ENCODE measurements at regions of chr19 and their contacts with region 1.

Region 1: GRCh38 chr19:20167020-20167644 is at the start of gene ZNF486:
- DNase-seq: peak; percentile 95 to 99 (median 96)
- ATAC-seq: peak; percentile 98 to 99 (median 99)
- H3K4me3 ChIP-seq: peak within 1 kb of the TSS; percentile 40 to 89 (median 70)
- H3K27ac ChIP-seq: peak within 1 kb of the TSS in 11 of 12 donors; percentile 37 to 81 (median 69)
- H3K4me1 ChIP-seq: peaks cover 0 to 10% (median 6%) of the 10 kb centered on the region in 12 donors
- H3K27me3 ChIP-seq: no peaks in the 10 kb centered on the region
- CTCF ChIP-seq: no peak
- POLR2A ChIP-seq: peak in 1 of 2 donors; percentile 52
- total RNA-seq, gene ZNF486: 1.2 to 3.5 (median 1.8) TPM

Region 2: GRCh38 chr19:20051841-20052768 is 115.0 kb before region 1 on chr19:
- intact Hi-C with region 1: loop called in 1 of 10 experiments (anchors 5 kb)
- DNase-seq: peak; percentile 94 to 98 (median 95)
- ATAC-seq: peak; percentile 99 to 100 (median 100)
- H3K4me3 ChIP-seq: peak overlapping the region; percentile 48 to 99 (median 74)
- H3K27ac ChIP-seq: peak overlapping the region; percentile 57 to 85 (median 73)
- H3K4me1 ChIP-seq: peaks cover 0 to 10% (median 2%) of the 10 kb centered on the region in 12 donors
- H3K27me3 ChIP-seq: no peaks in the 10 kb centered on the region
- CTCF ChIP-seq: peak in 3 of 12 donors; percentile 5 to 35 (median 14)
- POLR2A ChIP-seq: peak in 1 of 2 donors; percentile 59

Region 3: DNA sequence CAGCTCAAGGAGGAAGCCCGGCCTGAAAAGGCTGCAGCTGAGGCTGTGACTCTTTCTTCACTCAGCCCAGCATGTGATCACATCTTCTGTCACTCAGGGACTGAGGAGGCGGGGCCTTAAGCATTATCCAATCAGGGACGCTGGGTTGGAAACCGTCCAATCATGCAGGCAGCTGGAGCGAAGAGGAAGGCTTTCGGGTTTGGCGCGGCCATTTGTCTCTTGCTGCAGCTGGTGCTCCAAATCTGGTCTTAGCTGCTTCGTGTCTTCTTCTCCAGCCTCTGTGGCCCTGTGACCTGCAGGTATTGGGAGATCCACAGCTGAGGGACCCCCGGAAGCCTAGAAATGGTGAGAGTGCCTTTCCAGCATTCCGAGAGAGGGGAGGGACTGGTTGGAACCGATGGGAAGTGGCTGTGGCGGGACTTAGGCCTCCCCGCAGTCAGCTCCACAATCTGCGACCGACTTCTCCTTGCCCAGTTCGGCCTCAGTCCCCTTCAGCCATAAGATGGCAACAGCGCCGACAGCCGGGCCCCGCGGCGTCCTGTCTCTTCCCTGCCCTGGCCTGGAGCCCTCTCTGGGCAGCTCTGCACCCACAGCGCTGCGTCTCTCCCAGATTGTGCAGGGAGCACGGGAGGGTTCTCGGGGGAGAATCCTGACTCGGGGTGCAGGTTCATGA is 89.2 kb before region 1 on chr19 and contains the start of gene ZNF90:
- intact Hi-C with region 1: loop called in 2 of 10 experiments (anchors 2 kb)
- DNase-seq: peak; percentile 90 to 97 (median 95)
- ATAC-seq: peak; percentile 95 to 99 (median 98)
- H3K4me3 ChIP-seq: peak within 1 kb of the TSS; percentile 13 to 80 (median 60)
- H3K27ac ChIP-seq: peak within 1 kb of the TSS in 5 of 12 donors; percentile 3 to 46 (median 38)
- H3K4me1 ChIP-seq: peaks cover 0 to 20% (median 7%) of the 10 kb centered on the region in 12 donors
- H3K27me3 ChIP-seq: no peaks in the 10 kb centered on the region
- CTCF ChIP-seq: peak in 2 of 12 donors; percentile 7
- POLR2A ChIP-seq: peak in 1 of 2 donors; percentile 17
- total RNA-seq, gene ZNF90: 0.25 to 2.6 (median 0.54) TPM

Region 4: GRCh38 chr19:20237761-20238623 is 70.9 kb after region 1 on chr19:
- intact Hi-C with region 1: loop called in 2 of 10 experiments (anchors 5 kb)
- DNase-seq: peak; percentile 90 to 95 (median 93)
- ATAC-seq: peak; percentile 92 to 97 (median 96)
- H3K4me3 ChIP-seq: peak overlapping the region; percentile 43 to 80 (median 64)
- H3K27ac ChIP-seq: peak overlapping the region in 10 of 12 donors; percentile 1 to 65 (median 49)
- H3K4me1 ChIP-seq: peaks cover 0 to 17% (median 2%) of the 10 kb centered on the region in 12 donors
- H3K27me3 ChIP-seq: no peaks in the 10 kb centered on the region
- CTCF ChIP-seq: peak in 2 of 12 donors; percentile 7 to 17
- POLR2A ChIP-seq: no peak

Region 5: DNA sequence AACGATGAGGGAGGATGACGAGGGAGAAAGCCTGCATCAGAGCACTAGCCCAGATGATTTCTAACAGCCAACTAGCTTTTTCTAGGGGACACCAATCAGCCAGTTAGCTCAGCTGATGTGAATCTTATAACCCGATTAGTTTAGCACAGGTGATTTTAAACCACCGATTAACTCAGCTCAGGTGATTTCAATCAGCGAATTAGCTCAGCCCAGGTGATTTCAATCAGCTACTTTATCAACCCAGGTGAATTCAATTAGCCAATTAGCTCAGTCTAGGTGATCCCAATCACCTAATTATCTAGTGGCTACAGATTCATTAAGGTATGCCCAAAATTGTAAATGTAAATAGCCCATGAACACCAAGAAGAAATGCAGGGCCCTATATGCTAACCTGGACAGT is 146.8 kb after region 1 on chr19:
- intact Hi-C with region 1: no loop called
- DNase-seq: no peak
- ATAC-seq: no peak
- H3K4me3 ChIP-seq: no peak overlapping the region
- H3K27ac ChIP-seq: no peak overlapping the region
- H3K4me1 ChIP-seq: no peaks in the 10 kb centered on the region
- H3K27me3 ChIP-seq: no peaks in the 10 kb centered on the region
- CTCF ChIP-seq: no peak
- POLR2A ChIP-seq: no peak

Measured in heart left ventricle (tissue), 16 donors.